Activated CD4-positive, alpha-beta memory T cell treated with anti-CD3 and anti-CD28 coated beads for 36 hours (primary cell): ENCODE measurements at regions of chr18 and their contacts with region 1.

Region 1: DNA sequence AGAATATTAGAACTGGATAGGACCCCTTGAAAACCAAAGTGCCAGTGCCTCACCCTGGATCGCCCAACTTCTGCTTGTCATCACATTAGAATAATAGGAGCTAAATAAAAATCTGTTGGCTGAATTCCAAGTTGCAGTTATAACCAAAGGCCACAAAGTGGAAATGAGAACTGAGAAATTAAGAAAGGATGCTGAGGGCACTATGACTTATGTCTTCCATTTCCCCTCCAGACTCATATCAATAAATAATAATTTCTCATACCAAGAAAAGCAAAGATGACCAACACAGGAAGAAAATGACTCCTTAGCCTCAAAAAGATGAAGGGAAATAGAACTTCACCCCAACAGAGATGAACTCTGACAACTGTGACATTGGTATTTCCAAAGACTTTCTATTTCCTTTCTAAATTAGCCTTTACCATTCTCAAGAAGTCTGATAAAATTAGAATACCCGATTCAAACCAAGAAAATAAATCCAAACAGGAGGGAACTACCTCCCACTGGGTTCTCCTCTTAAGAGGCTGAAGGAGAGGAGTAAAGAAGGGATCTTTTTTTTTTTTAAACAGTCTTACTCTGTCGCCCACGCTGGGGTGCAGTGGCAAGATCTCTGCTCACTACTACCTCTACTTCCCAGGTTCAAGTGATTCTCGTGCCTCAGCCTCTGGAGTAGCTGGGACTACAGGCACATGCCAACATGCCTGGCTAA is 46.5 kb upstream of the EPG5 start:
- DNase-seq: peak; percentile 19
- H3K4me3 Mint-ChIP-seq: no peak overlapping the region
- H3K27ac Mint-ChIP-seq: peak overlapping the region; percentile 28
- H3K4me1 Mint-ChIP-seq: peaks cover 16% of the 10 kb centered on the region
- H3K27me3 Mint-ChIP-seq: peaks cover 2% of the 10 kb centered on the region

Region 2: DNA sequence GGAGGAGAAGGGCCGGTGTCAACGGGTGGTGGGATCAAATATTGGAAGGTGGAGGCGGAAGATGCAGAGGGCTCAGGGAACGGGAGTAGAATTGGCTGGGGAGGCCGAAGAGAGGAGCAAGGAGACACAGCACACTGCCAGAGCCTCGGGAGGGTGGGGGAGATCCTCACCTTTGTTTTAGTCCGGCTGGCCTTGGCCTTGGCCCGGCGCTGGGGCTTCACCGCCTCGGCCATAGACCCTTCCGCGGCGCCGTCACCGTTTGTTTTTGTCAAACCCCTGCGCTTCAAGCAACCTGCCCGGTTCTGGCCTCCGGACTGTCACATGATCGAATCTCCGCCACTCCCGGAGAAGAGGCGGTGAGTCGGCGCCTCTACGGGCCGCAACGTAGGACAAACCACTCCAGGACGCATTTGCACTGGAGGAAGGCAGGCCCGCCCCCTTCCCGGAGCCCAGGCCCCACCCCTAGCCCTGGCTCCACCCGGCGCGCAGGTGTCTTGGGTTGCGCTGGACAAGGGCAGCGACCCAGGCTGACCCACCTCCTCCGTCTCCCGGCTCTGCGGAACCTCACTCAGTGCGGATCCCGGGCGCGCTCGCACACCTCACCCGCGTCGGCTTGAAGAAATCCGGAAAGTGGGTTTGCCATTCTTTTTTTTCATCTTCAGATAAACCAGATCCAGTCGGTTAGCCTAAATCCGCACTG is 46.5 kb before region 1 on chr18 and contains the start of gene EPG5:
- CTCF ChIA-PET with region 1: no interaction called
- POLR2A ChIA-PET with region 1: no interaction called
- intact Hi-C with region 1: loop called (anchors 1 kb)
- DNase-seq: peak; percentile 97
- H3K4me3 Mint-ChIP-seq: peak within 1 kb of the TSS; percentile 93
- H3K27ac Mint-ChIP-seq: peak within 1 kb of the TSS; percentile 83
- H3K4me1 Mint-ChIP-seq: peaks cover 33% of the 10 kb centered on the region
- H3K27me3 Mint-ChIP-seq: no peaks in the 10 kb centered on the region
- total RNA-seq, gene EPG5: 18.8 to 21.4 TPM

Region 3: DNA sequence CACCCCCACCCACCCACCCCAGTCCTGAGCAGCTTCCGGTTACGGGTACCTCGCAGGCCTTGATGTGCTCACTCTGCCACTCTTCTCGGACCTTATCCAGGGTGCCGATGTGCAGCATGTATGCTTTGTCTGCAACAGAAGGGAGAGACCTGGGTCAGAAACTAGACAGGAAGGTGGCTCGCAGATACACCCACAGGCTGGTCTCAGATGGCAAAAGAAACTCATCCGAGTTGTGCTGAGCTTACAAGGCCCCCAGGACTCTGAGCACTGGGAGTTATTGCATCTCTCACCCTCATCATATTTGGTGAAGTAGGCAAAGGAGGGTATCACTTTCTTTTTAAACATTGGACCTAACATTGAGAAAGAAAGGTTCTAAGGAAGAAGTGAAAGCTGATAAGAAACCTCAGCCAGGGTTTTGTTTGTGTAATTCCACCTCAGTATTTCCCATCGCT is 15.9 kb before region 1 on chr18:
- CTCF ChIA-PET with region 1: interaction called, 4 read pairs
- POLR2A ChIA-PET with region 1: no interaction called
- intact Hi-C with region 1: loop called (anchors 1 kb)
- DNase-seq: peak; percentile 57
- H3K4me3 Mint-ChIP-seq: peak overlapping the region; percentile 59
- H3K27ac Mint-ChIP-seq: peak overlapping the region; percentile 72
- H3K4me1 Mint-ChIP-seq: peaks cover 44% of the 10 kb centered on the region
- H3K27me3 Mint-ChIP-seq: no peaks in the 10 kb centered on the region

Region 4: DNA sequence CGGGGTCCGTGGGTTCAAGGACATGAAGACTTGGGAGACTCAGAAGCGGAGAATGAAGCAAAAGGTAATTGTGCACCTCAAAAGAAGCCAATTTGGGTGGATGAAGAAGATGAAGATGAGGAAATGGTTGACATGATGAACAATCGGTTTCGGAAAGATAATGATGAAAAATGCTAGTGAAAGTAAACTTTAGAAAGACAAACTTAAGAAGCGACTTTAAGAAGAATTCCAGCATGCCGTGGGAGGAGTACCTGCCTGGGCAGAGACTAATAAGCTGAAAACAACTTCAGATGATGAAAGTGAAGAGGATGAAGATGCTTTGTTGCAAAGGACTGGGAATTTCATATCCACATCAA is 14.9 kb after region 1 on chr18:
- CTCF ChIA-PET with region 1: interaction called, 3 read pairs
- POLR2A ChIA-PET with region 1: no interaction called
- intact Hi-C with region 1: loop called (anchors 2 kb)
- DNase-seq: no peak
- H3K4me3 Mint-ChIP-seq: peak overlapping the region; percentile 79
- H3K27ac Mint-ChIP-seq: peak overlapping the region; percentile 79
- H3K4me1 Mint-ChIP-seq: peaks cover 14% of the 10 kb centered on the region
- H3K27me3 Mint-ChIP-seq: peaks cover 4% of the 10 kb centered on the region

Region 5: DNA sequence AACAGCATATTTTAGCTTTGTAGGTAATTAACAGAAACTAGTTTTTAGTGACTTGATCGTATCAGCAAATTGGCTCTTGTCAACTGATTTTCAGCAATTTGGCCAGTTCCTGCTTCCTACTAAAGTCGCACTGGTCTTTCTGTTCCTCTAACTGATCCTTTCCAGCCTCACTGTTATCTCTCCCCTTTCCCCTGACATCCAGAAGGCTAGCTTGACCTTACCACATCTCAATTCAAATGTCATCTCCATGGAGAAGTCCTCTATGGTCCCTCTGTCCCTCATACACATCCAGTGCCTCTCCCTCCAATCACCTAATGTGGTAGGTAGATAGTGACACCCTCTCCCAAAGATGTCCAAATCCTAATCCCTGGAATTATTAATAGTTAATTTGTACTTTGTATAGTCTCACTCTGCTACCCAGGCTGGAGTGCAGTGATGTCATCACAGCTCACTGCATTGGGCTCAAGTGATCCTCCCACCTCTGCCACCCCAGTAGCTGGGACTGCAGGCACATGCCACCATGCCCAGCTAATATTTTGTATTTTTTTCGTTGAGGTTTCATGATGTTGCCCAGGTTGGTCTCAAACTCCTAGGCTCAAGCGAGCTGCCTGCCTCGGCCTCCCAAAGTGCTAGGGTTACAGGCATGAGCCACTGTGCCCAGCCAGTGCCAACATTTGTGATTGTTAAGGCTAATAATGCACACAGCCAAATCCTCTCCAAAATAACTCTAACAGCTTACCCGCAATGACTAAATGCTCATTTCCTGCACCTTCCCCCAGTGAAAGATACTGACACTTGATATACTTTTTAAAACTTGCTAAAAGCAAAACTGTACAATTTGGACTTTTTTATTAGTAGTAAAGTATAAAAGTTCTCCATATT is 41.6 kb after region 1 on chr18:
- CTCF ChIA-PET with region 1: no interaction called
- POLR2A ChIA-PET with region 1: no interaction called
- intact Hi-C with region 1: loop called (anchors 1 kb)
- DNase-seq: no peak
- H3K4me3 Mint-ChIP-seq: no peak overlapping the region
- H3K27ac Mint-ChIP-seq: peak overlapping the region; percentile 24
- H3K4me1 Mint-ChIP-seq: peaks cover 41% of the 10 kb centered on the region
- H3K27me3 Mint-ChIP-seq: no peaks in the 10 kb centered on the region

Region 6: DNA sequence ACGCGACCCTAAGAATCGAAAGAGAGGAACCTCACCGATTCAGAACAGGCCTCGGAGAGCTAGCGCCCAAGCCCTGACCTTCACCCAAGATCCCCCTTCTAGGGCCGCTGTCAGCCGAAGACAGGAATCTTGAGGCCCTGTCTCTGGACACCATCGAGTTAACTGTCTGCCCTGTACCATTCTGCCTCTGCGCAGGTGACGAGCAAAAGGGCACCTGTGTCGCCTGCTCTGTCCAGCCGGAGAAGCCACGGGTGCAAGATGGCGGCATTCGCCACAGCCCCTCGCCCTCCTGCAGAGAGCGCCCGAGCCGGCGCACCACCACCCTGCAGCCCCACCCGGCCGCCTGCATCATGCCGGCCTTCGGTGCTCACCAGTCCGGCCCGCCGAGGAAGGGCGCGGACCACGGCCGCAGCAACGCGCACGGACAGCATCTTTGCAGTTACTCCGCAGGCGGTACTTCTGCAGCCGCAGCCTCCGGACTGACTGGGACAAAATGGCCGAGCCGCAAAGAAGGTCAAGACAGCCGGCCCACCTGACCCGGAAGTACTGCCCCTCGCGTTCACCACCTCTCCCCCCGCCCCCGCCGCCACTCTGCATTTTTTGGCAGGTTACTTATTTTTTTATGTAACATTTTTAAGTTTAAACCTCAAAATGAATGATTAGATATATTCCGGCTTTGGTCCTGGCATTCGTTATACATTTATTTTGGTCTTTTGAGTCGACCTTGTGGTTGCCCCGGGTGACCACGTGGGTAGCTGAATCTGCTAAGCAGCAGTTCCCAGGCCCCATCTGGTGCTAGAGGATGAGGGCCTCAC is 84.4 kb after region 1 on chr18 and contains the start of gene ATP5F1A:
- CTCF ChIA-PET with region 1: no interaction called
- POLR2A ChIA-PET with region 1: no interaction called
- intact Hi-C with region 1: no loop called
- DNase-seq: peak; percentile 94
- H3K4me3 Mint-ChIP-seq: peak within 1 kb of the TSS; percentile 98
- H3K27ac Mint-ChIP-seq: peak within 1 kb of the TSS; percentile 93
- H3K4me1 Mint-ChIP-seq: peaks cover 25% of the 10 kb centered on the region
- H3K27me3 Mint-ChIP-seq: no peaks in the 10 kb centered on the region
- total RNA-seq, gene ATP5F1A: 442 to 447 TPM

Region 7: DNA sequence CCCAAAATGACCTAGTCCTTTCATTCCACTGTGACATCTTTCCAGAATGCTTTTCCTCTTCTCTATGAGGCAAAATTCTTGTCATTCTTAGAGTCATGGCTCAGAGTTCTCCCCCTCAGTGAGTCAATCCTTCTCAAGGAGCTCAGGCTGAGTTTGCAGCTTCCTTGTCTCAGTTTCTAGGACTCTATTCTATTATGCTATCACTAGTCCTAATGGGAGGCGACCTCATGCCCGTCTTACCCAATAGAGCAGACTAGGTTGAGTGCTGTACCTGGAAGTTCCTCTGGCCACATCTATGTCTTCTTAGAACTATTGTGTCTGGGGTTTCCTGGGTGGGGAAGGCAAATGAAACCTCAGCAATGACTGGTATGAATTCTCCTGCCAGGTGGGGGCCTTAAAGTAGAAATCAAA is 142.0 kb after region 1 on chr18:
- CTCF ChIA-PET with region 1: no interaction called
- POLR2A ChIA-PET with region 1: no interaction called
- intact Hi-C with region 1: loop called (anchors 5 kb)
- DNase-seq: peak; percentile 67
- H3K4me3 Mint-ChIP-seq: peak overlapping the region; percentile 10
- H3K27ac Mint-ChIP-seq: peak overlapping the region; percentile 94
- H3K4me1 Mint-ChIP-seq: peaks cover 64% of the 10 kb centered on the region
- H3K27me3 Mint-ChIP-seq: no peaks in the 10 kb centered on the region

Region 8: GRCh38 chr18:46199515-46200147 is 186.0 kb after region 1 on chr18:
- CTCF ChIA-PET with region 1: no interaction called
- POLR2A ChIA-PET with region 1: no interaction called
- intact Hi-C with region 1: no loop called
- DNase-seq: no peak
- H3K4me3 Mint-ChIP-seq: no peak overlapping the region
- H3K27ac Mint-ChIP-seq: peak overlapping the region; percentile 5
- H3K4me1 Mint-ChIP-seq: peaks cover 60% of the 10 kb centered on the region
- H3K27me3 Mint-ChIP-seq: no peaks in the 10 kb centered on the region

Region 9: GRCh38 chr18:46250084-46250811 is 236.6 kb after region 1 on chr18:
- CTCF ChIA-PET with region 1: no interaction called
- POLR2A ChIA-PET with region 1: no interaction called
- intact Hi-C with region 1: loop called (anchors 1 kb)
- DNase-seq: peak; percentile 62
- H3K4me3 Mint-ChIP-seq: peak overlapping the region; percentile 42
- H3K27ac Mint-ChIP-seq: peak overlapping the region; percentile 79
- H3K4me1 Mint-ChIP-seq: peaks cover 57% of the 10 kb centered on the region
- H3K27me3 Mint-ChIP-seq: no peaks in the 10 kb centered on the region

Region 10: DNA sequence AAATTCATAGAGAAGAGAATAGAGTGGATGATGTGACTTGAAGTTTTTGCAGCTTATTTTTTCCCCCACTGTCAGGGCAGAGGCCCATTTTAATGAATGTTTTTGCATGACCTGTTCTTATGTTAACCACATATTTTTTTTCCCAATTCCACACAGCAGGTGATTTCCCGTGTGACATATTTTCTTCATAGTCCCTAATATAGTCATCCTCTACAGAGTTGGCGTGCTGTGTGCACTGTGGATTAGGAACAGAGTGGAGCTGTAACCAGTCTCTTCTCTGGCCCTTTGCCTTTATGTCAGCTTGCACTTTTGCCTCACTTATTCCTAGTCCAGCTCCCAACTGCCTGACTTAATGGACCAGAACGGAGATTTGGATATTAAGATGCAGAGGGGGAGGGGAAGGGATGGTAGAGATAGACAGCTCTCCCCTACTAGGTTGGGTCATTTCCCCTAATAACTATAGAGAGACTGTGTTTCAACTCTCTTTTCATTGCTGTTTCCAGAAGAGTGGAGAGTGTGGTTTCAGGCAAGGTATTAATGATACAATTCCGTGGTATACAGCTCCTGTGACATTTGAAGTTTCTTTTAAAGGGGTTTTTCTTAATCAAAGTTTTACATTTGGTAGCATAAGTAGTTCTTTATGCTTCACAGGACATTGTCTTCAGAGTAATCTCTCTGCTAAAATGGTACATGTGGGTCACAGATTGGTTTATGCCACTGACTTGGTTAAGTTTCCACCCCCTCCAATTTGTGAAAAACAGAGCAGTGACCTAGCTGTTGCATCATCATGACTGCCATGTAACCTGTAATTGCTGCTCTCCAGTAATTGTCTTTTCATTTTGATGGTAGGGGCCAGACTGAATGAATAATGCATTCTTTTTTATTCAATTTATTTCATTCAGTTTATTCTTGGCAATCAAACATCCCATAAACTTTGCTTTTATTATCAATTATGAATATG is 251.8 kb after region 1 on chr18:
- CTCF ChIA-PET with region 1: no interaction called
- POLR2A ChIA-PET with region 1: no interaction called
- intact Hi-C with region 1: no loop called
- DNase-seq: no peak
- H3K4me3 Mint-ChIP-seq: no peak overlapping the region
- H3K27ac Mint-ChIP-seq: peak overlapping the region; percentile 43
- H3K4me1 Mint-ChIP-seq: peaks cover 50% of the 10 kb centered on the region
- H3K27me3 Mint-ChIP-seq: no peaks in the 10 kb centered on the region